PC-3 (cell line): ENCODE measurements at regions of chr10 and their contacts with region 1.

Region 1: GRCh38 chr10:62437696-62438095 is 63.5 kb downstream of the ZNF365 start:
- DNase-seq: peak; percentile 100
- ATAC-seq: peak; percentile 67
- H3K4me3 ChIP-seq: no peak overlapping the region
- H3K27ac ChIP-seq: no peak overlapping the region
- H3K4me1 ChIP-seq: peaks cover 24% of the 10 kb centered on the region
- H3K27me3 ChIP-seq: no peaks in the 10 kb centered on the region
- CTCF ChIP-seq: peak; percentile 100

Region 2: GRCh38 chr10:61197057-61197456 is 1240.6 kb before region 1 on chr10:
- CTCF ChIA-PET with region 1: no interaction called
- POLR2A ChIA-PET with region 1: no interaction called
- intact Hi-C with region 1: no loop called
- DNase-seq: no peak
- ATAC-seq: no peak
- H3K4me3 ChIP-seq: no peak overlapping the region
- H3K27ac ChIP-seq: no peak overlapping the region
- H3K4me1 ChIP-seq: no peaks in the 10 kb centered on the region
- H3K27me3 ChIP-seq: no peaks in the 10 kb centered on the region
- CTCF ChIP-seq: no peak

Region 3: DNA sequence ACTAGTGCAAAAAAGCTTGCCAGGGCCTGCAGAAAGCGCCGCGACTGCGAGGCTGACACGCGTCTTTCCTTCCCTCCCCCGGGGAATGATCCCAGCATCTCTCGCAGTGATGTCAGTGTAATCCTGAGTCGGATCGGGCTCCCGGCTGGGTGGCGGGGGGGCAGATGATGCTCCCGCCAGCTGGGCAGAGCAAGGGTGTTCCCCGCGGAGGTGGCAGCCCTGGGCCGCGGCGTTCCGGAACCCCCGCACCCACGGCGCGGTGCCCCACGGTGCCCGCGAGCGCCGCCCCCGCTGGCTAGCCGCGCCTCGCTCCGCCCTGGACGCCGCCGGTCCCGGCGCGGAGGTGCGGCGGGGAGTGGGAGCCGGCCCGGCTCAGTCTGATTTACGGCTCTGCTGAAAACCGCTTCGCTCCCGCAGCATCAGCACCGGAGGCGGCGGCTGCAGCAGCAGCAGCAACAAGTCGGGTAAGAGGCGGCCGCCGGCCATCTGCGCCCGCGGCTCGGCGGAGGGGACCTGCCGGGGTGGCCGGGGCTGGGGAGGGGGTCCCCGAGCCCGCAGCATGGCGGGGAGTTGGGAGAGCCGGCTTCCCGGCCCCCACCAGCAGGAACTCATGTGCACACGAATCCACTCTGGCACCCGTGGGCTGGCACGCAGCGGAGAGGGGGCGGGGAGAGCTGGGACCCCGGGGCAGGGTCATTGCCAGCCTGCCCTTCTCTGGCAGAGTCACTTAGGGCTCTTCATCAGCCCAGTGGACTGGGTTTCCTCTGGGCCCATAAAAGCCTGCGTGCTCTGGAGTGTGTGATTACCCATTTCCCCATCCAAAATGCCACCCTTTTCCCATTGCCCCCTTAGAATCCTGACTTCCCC is 63.5 kb before region 1 on chr10 and contains the start of gene ZNF365:
- CTCF ChIA-PET with region 1: interaction called, 4 read pairs
- POLR2A ChIA-PET with region 1: interaction called, 3 read pairs
- intact Hi-C with region 1: loop called (anchors 1 kb)
- DNase-seq: peak; percentile 89
- ATAC-seq: peak; percentile 79
- H3K4me3 ChIP-seq: peak within 1 kb of the TSS; percentile 75
- H3K27ac ChIP-seq: no peak within 1 kb of the TSS
- H3K4me1 ChIP-seq: peaks cover 45% of the 10 kb centered on the region
- H3K27me3 ChIP-seq: no peaks in the 10 kb centered on the region
- CTCF ChIP-seq: no peak; the same call in 1 of the 2 replicates
- total RNA-seq, gene ZNF365: 19.0 and 20.2 TPM in 2 replicates

Region 4: DNA sequence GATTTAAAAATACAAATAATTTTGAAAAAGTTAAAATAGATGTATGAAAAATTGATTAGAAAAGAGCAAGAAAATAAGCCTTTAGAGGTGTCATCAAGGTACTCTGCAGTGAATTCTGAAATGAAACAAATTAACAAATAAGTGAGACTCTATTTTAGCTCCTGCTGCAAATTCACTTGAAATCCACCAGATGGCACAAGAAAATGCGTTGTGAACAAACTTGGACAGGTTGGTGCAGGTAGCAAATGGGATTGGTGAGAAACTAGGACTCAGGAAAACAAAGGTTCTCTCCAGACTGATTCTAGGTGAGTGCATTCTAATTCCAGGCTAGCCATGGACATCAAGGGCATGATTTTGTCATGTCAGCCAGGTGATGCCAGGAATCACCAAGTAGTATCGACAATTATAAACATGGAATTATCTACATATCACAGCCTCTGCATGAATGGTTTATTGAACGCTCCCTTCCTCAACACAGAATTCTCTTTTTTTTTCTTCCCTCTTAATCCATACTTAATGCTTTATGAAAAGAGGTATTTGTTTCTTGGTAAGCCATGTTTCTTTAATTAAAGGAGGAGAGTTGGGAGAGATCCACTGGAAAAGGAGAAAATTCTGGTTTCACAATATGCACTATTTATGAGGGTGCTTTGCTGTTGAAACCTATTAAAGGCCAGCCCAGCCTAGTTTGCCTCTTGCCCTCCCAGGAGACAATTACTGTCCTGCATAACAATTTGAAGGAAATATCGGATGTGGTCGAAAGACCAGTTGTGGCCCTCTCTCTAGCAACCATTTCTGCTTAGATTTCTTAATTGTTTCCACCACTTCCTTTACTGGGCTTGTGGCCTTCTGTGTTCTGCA is 54.5 kb after region 1 on chr10:
- CTCF ChIA-PET with region 1: interaction called, 9 read pairs
- POLR2A ChIA-PET with region 1: no interaction called
- intact Hi-C with region 1: loop called (anchors 1 kb)
- DNase-seq: peak; percentile 92
- ATAC-seq: peak; percentile 90
- H3K4me3 ChIP-seq: no peak overlapping the region
- H3K27ac ChIP-seq: no peak overlapping the region
- H3K4me1 ChIP-seq: no peaks in the 10 kb centered on the region
- H3K27me3 ChIP-seq: peaks cover 7% of the 10 kb centered on the region; the same call in 1 of the 2 replicates
- CTCF ChIP-seq: peak; percentile 100

Region 5: GRCh38 chr10:62528441-62528840 is 90.7 kb after region 1 on chr10:
- CTCF ChIA-PET with region 1: no interaction called
- POLR2A ChIA-PET with region 1: no interaction called
- intact Hi-C with region 1: no loop called
- DNase-seq: peak; percentile 60
- ATAC-seq: peak; percentile 81
- H3K4me3 ChIP-seq: no peak overlapping the region
- H3K27ac ChIP-seq: no peak overlapping the region
- H3K4me1 ChIP-seq: no peaks in the 10 kb centered on the region
- H3K27me3 ChIP-seq: no peaks in the 10 kb centered on the region
- CTCF ChIP-seq: no peak

Region 6: DNA sequence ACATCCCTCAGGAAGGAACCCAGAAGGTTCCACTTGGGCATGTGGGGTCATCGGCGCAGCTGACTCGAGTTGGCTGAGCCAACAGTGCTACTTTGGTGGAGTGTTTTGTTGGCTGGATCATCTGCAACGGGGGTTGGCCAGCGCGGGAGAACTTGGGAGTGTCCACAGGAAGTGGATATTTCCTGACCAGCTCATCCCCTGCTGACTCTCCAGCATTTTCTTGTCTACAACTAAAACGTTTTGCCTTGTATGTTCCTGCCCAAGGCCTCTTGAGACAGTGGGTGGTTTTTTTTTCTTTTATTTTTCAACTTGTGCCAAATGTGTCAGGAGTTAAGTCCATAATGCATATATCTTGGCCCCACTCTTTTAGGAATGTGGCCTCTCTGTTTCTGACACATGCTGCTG is 145.1 kb after region 1 on chr10:
- CTCF ChIA-PET with region 1: interaction called, 3 read pairs
- POLR2A ChIA-PET with region 1: no interaction called
- intact Hi-C with region 1: loop called (anchors 2 kb)
- DNase-seq: peak; percentile 86
- ATAC-seq: peak; percentile 77
- H3K4me3 ChIP-seq: no peak overlapping the region
- H3K27ac ChIP-seq: peak overlapping the region; percentile 1; the same call in 1 of the 2 replicates
- H3K4me1 ChIP-seq: peaks cover 11% of the 10 kb centered on the region
- H3K27me3 ChIP-seq: no peaks in the 10 kb centered on the region
- CTCF ChIP-seq: no peak

Region 7: DNA sequence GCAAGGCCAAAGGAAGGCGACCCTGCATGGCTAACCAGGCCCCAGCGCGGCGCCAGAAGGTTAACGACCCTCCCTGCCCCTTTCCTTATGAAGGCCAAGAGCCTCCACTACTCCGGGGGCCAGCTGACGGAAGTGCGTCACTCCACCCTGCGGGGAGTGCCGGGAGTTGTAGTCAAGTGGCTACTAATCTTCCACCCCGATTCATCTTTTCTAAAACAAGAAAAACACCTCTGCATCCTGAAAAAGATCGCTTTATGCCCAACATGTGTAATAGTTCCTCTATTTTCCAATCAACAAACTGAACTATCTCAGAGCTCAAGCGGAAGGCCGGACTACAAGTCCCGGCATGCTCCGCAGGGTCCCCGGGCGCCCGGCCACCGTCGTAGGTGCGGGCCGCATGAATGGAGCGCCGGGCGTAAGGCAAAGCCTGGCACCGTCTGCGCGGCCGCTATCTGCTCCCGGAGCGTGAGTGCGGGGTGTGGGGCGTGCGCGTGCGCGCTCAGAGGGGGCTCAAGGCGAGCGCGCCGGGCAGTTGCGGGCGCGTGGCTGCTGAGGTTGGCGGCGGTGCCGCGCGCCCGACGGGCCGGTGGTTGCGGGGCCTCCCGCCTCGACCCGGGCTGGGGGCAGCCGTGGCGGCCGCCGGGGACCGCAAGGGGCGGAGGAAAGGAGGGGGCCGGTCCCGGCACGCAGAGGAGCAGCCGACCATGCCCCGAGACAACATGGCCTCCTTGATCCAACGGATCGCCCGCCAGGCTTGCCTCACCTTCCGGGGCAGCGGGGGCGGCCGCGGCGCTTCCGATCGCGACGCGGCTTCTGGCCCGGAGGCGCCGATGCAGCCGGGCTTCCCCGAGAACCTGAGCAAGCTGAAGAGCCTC is 366.9 kb after region 1 on chr10 and contains the start of gene ADO:
- CTCF ChIA-PET with region 1: interaction called, 3 read pairs
- POLR2A ChIA-PET with region 1: no interaction called
- intact Hi-C with region 1: loop called (anchors 1 kb)
- DNase-seq: peak; percentile 97
- ATAC-seq: peak; percentile 82
- H3K4me3 ChIP-seq: peak within 1 kb of the TSS; percentile 79
- H3K27ac ChIP-seq: peak within 1 kb of the TSS; percentile 60
- H3K4me1 ChIP-seq: peaks cover 37% of the 10 kb centered on the region
- H3K27me3 ChIP-seq: no peaks in the 10 kb centered on the region
- CTCF ChIP-seq: no peak
- total RNA-seq, gene ADO: 107 and 129 TPM in 2 replicates

Region 8: GRCh38 chr10:62946278-62946677 is 508.6 kb after region 1 on chr10:
- CTCF ChIA-PET with region 1: no interaction called
- POLR2A ChIA-PET with region 1: no interaction called
- intact Hi-C with region 1: no loop called
- DNase-seq: no peak
- ATAC-seq: 0 out of 2 replicates have a peak, but pooled peaks have one; percentile 11
- H3K4me3 ChIP-seq: no peak overlapping the region
- H3K27ac ChIP-seq: no peak overlapping the region
- H3K4me1 ChIP-seq: no peaks in the 10 kb centered on the region
- H3K27me3 ChIP-seq: no peaks in the 10 kb centered on the region
- CTCF ChIP-seq: no peak

Region 9: GRCh38 chr10:63133056-63133820 is 695.5 kb after region 1 on chr10 and contains the start of gene NRBF2:
- CTCF ChIA-PET with region 1: no interaction called
- POLR2A ChIA-PET with region 1: no interaction called
- intact Hi-C with region 1: loop called (anchors 1 kb)
- DNase-seq: peak; percentile 100
- ATAC-seq: peak; percentile 95
- H3K4me3 ChIP-seq: peak within 1 kb of the TSS; percentile 75
- H3K27ac ChIP-seq: peak within 1 kb of the TSS; percentile 33
- H3K4me1 ChIP-seq: peaks cover 26% of the 10 kb centered on the region
- H3K27me3 ChIP-seq: no peaks in the 10 kb centered on the region
- CTCF ChIP-seq: peak; percentile 86
- total RNA-seq, gene NRBF2: 43.4 and 44.4 TPM in 2 replicates